CD8-positive, alpha-beta T cell (primary cell): ENCODE measurements at regions of chr9 and their contacts with region 1.

Region 1: GRCh38 chr9:132582276-132582785 is at the start of gene BARHL1:
- DNase-seq: no peak
- ATAC-seq: no peak
- H3K4me3 ChIP-seq: peak within 1 kb of the TSS; percentile 20 to 39
- H3K4me3 Mint-ChIP-seq: peak within 1 kb of the TSS; percentile 74
- H3K27ac ChIP-seq: no peak within 1 kb of the TSS
- H3K27ac Mint-ChIP-seq: no peak within 1 kb of the TSS
- H3K4me1 ChIP-seq: peaks cover 12% of the 10 kb centered on the region
- H3K4me1 Mint-ChIP-seq: peaks cover 9% of the 10 kb centered on the region
- H3K27me3 ChIP-seq: peaks cover 64 to 70% of the 10 kb centered on the region in 2 experiments
- H3K27me3 Mint-ChIP-seq: peaks cover 60% of the 10 kb centered on the region
- CTCF ChIP-seq: no peak
- total RNA-seq, gene BARHL1: not detected

Region 2: GRCh38 chr9:132354637-132355355 is 227.5 kb before region 1 on chr9 and contains the start of gene SETX:
- CTCF ChIA-PET with region 1: no interaction called
- POLR2A ChIA-PET with region 1: no interaction called
- intact Hi-C with region 1: loop called in 1 of 2 experiments (anchors 1 kb)
- DNase-seq: peak; percentile 92 to 99 (median 97)
- ATAC-seq: peak; percentile 83
- H3K4me3 ChIP-seq: peak within 1 kb of the TSS; percentile 77 to 86
- H3K4me3 Mint-ChIP-seq: peak within 1 kb of the TSS; percentile 87
- H3K27ac ChIP-seq: peak within 1 kb of the TSS; percentile 94 to 97
- H3K27ac Mint-ChIP-seq: peak within 1 kb of the TSS; percentile 98
- H3K4me1 ChIP-seq: peaks cover 40% of the 10 kb centered on the region
- H3K4me1 Mint-ChIP-seq: peaks cover 44% of the 10 kb centered on the region
- H3K27me3 ChIP-seq: no peaks in the 10 kb centered on the region
- H3K27me3 Mint-ChIP-seq: no peaks in the 10 kb centered on the region
- CTCF ChIP-seq: no peak
- total RNA-seq, gene SETX: 37.5 to 40.7 TPM

Region 3: DNA sequence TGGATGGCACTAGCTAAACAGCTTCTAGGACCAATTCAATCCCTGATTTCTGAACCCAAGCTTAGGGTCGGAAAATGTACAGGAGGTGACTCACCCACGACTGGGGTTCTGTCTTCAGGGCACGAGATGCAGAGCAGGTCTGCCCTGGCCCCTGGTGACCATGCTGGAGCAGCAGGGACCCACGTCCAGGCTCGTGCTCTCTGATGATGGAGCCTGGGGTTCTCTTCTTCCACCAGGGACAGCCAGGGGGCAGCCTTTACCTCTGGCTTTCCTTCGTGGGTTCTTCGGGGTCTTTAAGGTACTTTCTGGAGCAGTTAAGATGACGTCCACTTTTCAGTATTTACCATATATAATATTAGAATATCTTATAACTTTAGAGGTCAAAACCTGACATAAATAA is 170.2 kb before region 1 on chr9:
- CTCF ChIA-PET with region 1: no interaction called
- POLR2A ChIA-PET with region 1: no interaction called
- intact Hi-C with region 1: loop called (anchors 2 kb)
- DNase-seq: peak in 4 of 9 experiments; percentile 20 to 63 (median 39)
- ATAC-seq: no peak
- H3K4me3 ChIP-seq: no peak overlapping the region
- H3K4me3 Mint-ChIP-seq: peak overlapping the region; percentile 5
- H3K27ac ChIP-seq: no peak overlapping the region
- H3K27ac Mint-ChIP-seq: no peak overlapping the region
- H3K4me1 ChIP-seq: peaks cover 29% of the 10 kb centered on the region
- H3K4me1 Mint-ChIP-seq: peaks cover 26% of the 10 kb centered on the region
- H3K27me3 ChIP-seq: peaks cover 16 to 17% of the 10 kb centered on the region in 2 experiments
- H3K27me3 Mint-ChIP-seq: peaks cover 53% of the 10 kb centered on the region
- CTCF ChIP-seq: peak; percentile 47

Region 4: GRCh38 chr9:132531187-132531586 is 51.1 kb before region 1 on chr9:
- CTCF ChIA-PET with region 1: no interaction called
- POLR2A ChIA-PET with region 1: no interaction called
- intact Hi-C with region 1: no loop called
- DNase-seq: no peak
- ATAC-seq: no peak
- H3K4me3 ChIP-seq: no peak overlapping the region
- H3K4me3 Mint-ChIP-seq: no peak overlapping the region
- H3K27ac ChIP-seq: no peak overlapping the region
- H3K27ac Mint-ChIP-seq: no peak overlapping the region
- H3K4me1 ChIP-seq: no peaks in the 10 kb centered on the region
- H3K4me1 Mint-ChIP-seq: no peaks in the 10 kb centered on the region
- H3K27me3 ChIP-seq: no peaks in the 10 kb centered on the region
- H3K27me3 Mint-ChIP-seq: peaks cover 18% of the 10 kb centered on the region
- CTCF ChIP-seq: no peak